Posterior vena cava (tissue), 2 donors: ENCODE measurements at regions of chr4 and their contacts with region 1.

Region 1: DNA sequence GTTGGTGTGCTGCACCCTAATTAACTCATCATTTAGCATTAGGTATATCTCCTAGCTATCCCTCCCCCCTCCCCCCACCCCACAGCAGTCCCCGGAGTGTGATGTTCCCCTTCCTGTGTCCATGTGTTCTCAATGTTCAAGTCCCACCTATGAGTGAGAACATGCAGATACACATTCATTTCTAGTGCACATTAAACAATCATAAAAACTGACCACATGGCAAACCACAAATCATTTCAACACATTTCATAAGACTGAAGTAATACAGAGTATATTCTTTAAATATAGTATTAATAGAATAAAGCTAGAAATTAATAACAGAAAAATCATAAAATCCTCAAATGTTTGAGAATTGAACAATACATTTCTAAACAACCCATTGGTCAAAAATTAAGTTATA is 34.1 kb downstream of the PRKG2 start:
- DNase-seq: no peak

Region 2: GRCh38 chr4:81314196-81314896 is 133.4 kb after region 1 on chr4:
- intact Hi-C with region 1: no loop called
- DNase-seq: no peak

Region 3: GRCh38 chr4:81771721-81772120 is 590.8 kb after region 1 on chr4:
- intact Hi-C with region 1: no loop called
- DNase-seq: no peak

Region 4: GRCh38 chr4:82240410-82240809 is 1059.5 kb after region 1 on chr4:
- intact Hi-C with region 1: loop called in 1 of 2 experiments (anchors 5 kb)
- DNase-seq: no peak